PC-9 (cell line): ENCODE measurements at regions of chr6 and their contacts with region 1.

Region 1: DNA sequence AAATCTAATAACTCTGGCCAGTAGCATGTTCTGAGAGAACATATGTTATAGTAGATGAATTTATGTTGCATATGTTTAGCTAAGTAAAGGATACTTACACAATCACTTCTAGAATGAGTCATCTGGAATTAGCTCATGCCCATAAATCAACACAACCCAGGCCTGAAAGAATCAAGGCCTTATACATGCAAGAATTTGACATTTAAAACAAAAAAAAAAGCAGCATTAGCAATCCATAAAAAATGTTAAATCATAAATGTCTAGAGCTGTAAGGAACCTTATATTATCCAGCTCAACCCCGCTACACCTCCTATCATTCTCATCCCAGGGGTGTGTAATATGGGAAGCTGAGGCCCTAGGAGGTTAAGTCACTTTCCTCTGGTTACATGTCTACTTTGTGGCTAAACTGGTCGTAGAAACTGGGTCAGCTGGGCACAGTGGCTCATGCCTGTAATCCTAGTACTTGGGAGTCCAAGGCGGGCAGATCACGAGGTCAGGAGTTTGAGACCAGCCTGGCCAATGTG is 105.2 kb upstream of the CARMIL1 start:
- DNase-seq: peak; percentile 66 to 98
- H3K4me3 ChIP-seq: no peak overlapping the region
- H3K27ac ChIP-seq: peak overlapping the region; percentile 98
- H3K4me1 ChIP-seq: peaks cover 56% of the 10 kb centered on the region
- H3K27me3 ChIP-seq: no peaks in the 10 kb centered on the region
- CTCF ChIP-seq: no peak

Region 2: GRCh38 chr6:24658573-24659511 is 515.2 kb before region 1 on chr6:
- CTCF ChIA-PET with region 1: no interaction called
- POLR2A ChIA-PET with region 1: no interaction called
- intact Hi-C with region 1: loop called (anchors 5 kb)
- DNase-seq: peak; percentile 75 to 99
- H3K4me3 ChIP-seq: peak overlapping the region; percentile 36
- H3K27ac ChIP-seq: peak overlapping the region; percentile 99
- H3K4me1 ChIP-seq: peaks cover 72% of the 10 kb centered on the region
- H3K27me3 ChIP-seq: no peaks in the 10 kb centered on the region
- CTCF ChIP-seq: no peak

Region 3: DNA sequence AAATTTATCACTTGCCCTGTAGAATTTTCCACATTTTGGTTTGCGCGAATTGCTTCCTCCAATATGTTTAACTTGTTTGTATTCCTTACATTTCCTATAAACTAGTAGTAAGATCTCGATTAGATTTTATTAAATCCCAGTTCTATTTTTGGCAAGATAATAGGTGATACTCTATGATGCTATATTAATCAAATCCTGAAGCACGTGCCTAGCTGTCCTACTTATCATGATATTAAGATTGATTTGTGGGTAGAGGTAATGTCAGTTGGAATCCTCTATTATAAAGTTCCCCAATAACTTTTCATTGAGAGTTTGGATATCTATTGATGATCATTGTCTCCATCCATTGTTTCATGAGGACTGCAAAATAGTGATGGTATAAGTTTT is 155.5 kb before region 1 on chr6:
- CTCF ChIA-PET with region 1: no interaction called
- POLR2A ChIA-PET with region 1: no interaction called
- intact Hi-C with region 1: no loop called
- DNase-seq: no peak
- H3K4me3 ChIP-seq: no peak overlapping the region
- H3K27ac ChIP-seq: peak overlapping the region; percentile 74
- H3K4me1 ChIP-seq: peaks cover 33% of the 10 kb centered on the region
- H3K27me3 ChIP-seq: no peaks in the 10 kb centered on the region
- CTCF ChIP-seq: no peak

Region 4: DNA sequence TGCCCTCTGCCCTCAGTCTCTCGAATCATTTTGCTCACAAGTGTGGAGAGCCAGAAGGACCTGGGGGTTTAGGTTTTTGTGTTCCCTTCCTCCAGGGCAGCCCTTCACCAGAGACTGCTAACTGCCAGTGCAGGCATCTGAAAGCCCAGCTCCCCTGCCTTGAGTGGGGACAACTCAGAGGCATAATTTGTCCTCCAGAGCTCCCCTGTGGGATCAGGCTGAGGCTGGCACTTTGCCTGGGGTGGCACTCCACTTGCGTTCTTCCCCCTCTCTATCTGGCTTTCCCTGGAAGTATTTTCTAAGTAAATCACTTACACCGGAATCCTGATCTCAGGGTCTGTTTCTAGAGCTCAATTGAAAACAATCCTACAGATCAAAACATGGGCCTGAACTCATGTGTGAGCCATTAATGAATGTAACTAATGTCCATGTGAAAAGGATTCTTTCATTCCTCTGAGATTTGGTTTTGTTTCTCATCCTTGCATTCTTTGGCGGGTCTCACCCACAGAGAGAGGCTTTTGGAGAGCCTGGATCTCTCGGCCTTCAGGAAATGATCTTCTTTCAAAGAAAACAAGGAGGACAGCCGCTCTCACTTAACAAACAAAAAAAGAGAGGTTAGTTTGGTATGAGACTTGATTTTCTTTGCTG is 112.6 kb before region 1 on chr6:
- CTCF ChIA-PET with region 1: no interaction called
- POLR2A ChIA-PET with region 1: no interaction called
- intact Hi-C with region 1: no loop called
- DNase-seq: no peak
- H3K4me3 ChIP-seq: no peak overlapping the region
- H3K27ac ChIP-seq: no peak overlapping the region
- H3K4me1 ChIP-seq: no peaks in the 10 kb centered on the region
- H3K27me3 ChIP-seq: no peaks in the 10 kb centered on the region
- CTCF ChIP-seq: no peak

Region 5: DNA sequence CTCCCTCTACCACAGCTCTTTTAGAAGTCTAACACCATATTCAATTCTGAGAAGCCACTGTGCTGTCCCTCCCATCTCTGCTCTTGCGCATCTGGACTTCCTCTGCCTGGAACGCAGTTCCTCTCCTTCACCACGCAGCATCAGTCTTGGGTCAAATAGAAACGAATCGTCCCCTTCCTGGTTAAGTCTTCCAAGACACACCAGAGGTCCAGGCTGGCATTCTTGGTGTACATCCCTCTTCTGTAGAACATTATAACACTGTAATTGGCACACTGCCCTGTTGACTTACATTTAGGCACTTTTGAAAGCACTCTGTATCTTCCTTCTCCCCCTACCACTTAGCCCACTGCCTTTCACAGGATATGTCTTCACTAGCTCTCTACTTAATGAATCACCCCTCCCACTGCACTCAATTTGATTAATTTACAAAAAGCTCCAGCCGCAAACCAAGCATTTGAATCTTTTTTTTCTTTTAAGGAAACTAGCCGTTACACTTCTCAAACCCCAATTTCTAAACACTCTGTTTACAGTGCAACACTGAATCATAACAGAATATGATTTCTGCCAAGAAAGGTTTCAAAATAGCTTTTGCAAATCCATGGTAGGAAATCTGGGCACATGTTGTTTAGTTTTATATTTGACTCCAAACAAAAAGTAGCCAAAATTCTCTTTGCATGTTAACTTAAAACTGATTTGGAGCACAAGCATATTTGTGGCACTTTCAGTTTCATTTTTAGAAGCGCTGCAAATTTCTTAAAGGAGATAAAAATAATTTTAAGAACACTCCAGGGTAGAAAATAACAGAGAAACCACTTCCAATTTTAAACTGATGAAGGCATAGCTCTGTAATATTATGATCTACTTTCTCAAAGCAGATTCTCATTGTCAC is 35.5 kb before region 1 on chr6:
- CTCF ChIA-PET with region 1: no interaction called
- POLR2A ChIA-PET with region 1: no interaction called
- intact Hi-C with region 1: loop called (anchors 2 kb)
- DNase-seq: peak in 1 of 2 experiments; percentile 24
- H3K4me3 ChIP-seq: peak overlapping the region; percentile 52
- H3K27ac ChIP-seq: peak overlapping the region; percentile 22; the same call in 1 of the 2 replicates
- H3K4me1 ChIP-seq: peaks cover 14% of the 10 kb centered on the region
- H3K27me3 ChIP-seq: no peaks in the 10 kb centered on the region
- CTCF ChIP-seq: no peak

Region 6: GRCh38 chr6:25278914-25279747 is 105.1 kb after region 1 on chr6 and contains the start of gene CARMIL1:
- CTCF ChIA-PET with region 1: no interaction called
- POLR2A ChIA-PET with region 1: interaction called, 12 read pairs
- intact Hi-C with region 1: no loop called
- DNase-seq: peak; percentile 78 to 94
- H3K4me3 ChIP-seq: peak within 1 kb of the TSS; percentile 96
- H3K27ac ChIP-seq: peak within 1 kb of the TSS; percentile 62
- H3K4me1 ChIP-seq: peaks cover 21% of the 10 kb centered on the region
- H3K27me3 ChIP-seq: no peaks in the 10 kb centered on the region
- CTCF ChIP-seq: peak; percentile 66
- total RNA-seq, gene CARMIL1: 25.7 and 33.1 TPM in 2 replicates

Region 7: GRCh38 chr6:25499615-25500235 is 325.7 kb after region 1 on chr6:
- CTCF ChIA-PET with region 1: no interaction called
- POLR2A ChIA-PET with region 1: interaction called, 36 read pairs
- intact Hi-C with region 1: no loop called
- DNase-seq: peak; percentile 54 to 93
- H3K4me3 ChIP-seq: no peak overlapping the region
- H3K27ac ChIP-seq: peak overlapping the region; percentile 68
- H3K4me1 ChIP-seq: peaks cover 25% of the 10 kb centered on the region
- H3K27me3 ChIP-seq: no peaks in the 10 kb centered on the region
- CTCF ChIP-seq: no peak